ENCODE measurements at regions of chr5 and their contacts with region 1.

Region 1: DNA sequence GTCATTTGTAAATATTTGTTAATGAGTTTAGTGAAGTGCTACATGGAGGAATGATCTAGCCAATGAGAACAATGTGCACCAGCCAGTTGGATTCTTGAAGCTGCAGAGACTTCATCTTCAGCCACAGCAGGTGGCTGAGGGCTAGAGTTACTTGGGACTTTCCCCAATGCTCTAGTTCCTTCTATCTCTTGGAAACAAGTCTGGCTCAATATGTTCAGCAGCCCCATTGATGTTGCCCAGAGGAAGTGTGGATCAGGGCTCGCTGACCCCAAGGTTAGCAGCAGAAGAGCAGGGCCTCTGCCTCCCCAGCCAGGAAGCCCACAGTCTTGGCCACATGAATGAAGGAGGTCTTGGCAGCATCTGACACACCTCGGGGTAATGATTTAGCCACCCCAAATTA is 117.5 kb downstream of the SLC1A3 start:
- DNase-seq: peak; percentile 42
- ATAC-seq: peak; percentile 59
- H3K4me3 Mint-ChIP-seq: peak overlapping the region; percentile 77
- H3K27ac Mint-ChIP-seq: peak overlapping the region; percentile 93
- H3K4me1 Mint-ChIP-seq: peaks cover 63% of the 10 kb centered on the region
- H3K27me3 Mint-ChIP-seq: peaks cover 2% of the 10 kb centered on the region
- CTCF ChIP-seq: no peak

Region 2: GRCh38 chr5:36701085-36701698 is 22.7 kb before region 1 on chr5:
- CTCF ChIA-PET with region 1: interaction called, 9 read pairs
- POLR2A ChIA-PET with region 1: interaction called, 29 read pairs
- intact Hi-C with region 1: loop called (anchors 1 kb)
- DNase-seq: no peak
- ATAC-seq: peak; percentile 98
- H3K4me3 Mint-ChIP-seq: peak overlapping the region; percentile 62
- H3K27ac Mint-ChIP-seq: peak overlapping the region; percentile 82
- H3K4me1 Mint-ChIP-seq: peaks cover 29% of the 10 kb centered on the region
- H3K27me3 Mint-ChIP-seq: no peaks in the 10 kb centered on the region
- CTCF ChIP-seq: no peak

Region 3: DNA sequence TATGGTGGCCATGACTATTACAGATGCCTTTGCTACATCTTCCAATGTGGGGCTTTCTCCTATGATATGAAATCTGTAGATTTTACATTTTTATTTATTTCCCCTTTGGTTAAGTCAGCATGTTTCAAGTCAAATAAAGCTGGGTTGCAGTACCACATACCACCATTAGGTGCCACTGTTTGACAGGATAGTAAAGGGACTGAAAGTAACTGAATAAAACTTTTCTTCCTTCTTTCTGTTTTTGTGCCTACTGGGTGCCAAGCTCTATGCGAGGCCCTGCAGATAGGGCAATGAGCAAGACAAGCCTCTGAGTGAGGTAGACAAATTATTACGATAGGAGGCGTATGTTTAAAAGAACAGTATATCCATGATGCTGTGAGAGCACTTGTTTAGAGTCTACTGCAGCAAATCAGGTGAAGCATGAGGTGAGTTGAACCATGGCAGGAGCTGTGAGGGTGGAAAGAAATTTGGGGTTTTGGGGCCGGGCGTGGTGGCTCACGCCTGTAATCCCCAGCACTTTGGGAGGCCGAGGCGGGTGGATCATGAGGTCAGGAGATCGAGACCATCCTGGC is 1051.1 kb after region 1 on chr5:
- CTCF ChIA-PET with region 1: no interaction called
- POLR2A ChIA-PET with region 1: no interaction called
- intact Hi-C with region 1: no loop called
- DNase-seq: no peak
- ATAC-seq: no peak
- H3K4me3 Mint-ChIP-seq: no peak overlapping the region
- H3K27ac Mint-ChIP-seq: no peak overlapping the region
- H3K4me1 Mint-ChIP-seq: no peaks in the 10 kb centered on the region
- H3K27me3 Mint-ChIP-seq: peaks cover 4% of the 10 kb centered on the region
- CTCF ChIP-seq: no peak

Measured in activated B cell treated with CpG ODN at 0.5 μM for 24 hours (primary cell).